Caco-2 (cell line): ENCODE measurements at regions of chrX and their contacts with region 1.

Region 1: DNA sequence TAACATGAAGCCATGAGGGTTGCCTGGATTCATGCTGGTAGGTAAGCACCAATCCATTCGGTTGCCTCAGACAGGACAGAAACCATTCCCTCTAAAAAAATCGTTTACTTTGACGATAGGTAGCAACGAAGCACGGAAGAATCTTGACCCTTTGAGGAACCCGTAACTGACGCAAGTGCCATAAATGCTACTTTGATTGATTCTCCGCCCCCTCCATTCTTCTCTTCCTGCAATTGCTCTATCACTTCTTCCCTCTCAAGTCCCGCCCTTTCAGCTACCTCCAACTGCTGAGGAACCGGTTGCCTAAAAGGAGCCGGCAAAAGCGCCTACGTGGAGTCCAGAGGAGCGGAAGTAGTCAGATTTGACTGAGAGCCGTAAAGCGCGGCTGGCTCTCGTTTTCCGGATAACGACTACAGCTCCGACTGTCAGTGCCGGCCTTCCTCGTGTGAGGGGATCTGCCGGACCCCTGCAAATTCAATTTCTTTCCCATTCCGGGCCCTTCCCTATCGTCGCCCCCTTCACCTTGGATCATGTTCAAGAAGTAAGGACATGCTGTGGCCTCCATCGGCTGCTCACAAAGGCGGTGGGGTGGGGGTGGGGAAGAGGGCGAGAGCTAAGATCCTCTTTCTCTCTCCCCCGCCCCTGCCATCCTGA is at the start of gene MCTS1:
- DNase-seq: peak; percentile 88 to 95
- H3K4me3 ChIP-seq: peak within 1 kb of the TSS; percentile 67
- H3K4me3 Mint-ChIP-seq: peak within 1 kb of the TSS; percentile 99
- H3K27ac Mint-ChIP-seq: peak within 1 kb of the TSS; percentile 98
- H3K4me1 ChIP-seq: no peaks in the 10 kb centered on the region
- H3K4me1 Mint-ChIP-seq: no peaks in the 10 kb centered on the region
- H3K27me3 ChIP-seq: no peaks in the 10 kb centered on the region
- H3K27me3 Mint-ChIP-seq: no peaks in the 10 kb centered on the region
- CTCF ChIP-seq: no peak
- total RNA-seq, gene MCTS1: 50.5 and 55.8 TPM in 2 replicates

Region 2: GRCh38 chrX:120629667-120630537 is 26.1 kb after region 1 on chrX and contains the start of gene C1GALT1C1:
- CTCF ChIA-PET with region 1: no interaction called
- POLR2A ChIA-PET with region 1: no interaction called
- intact Hi-C with region 1: loop called (anchors 1 kb)
- DNase-seq: peak; percentile 92 to 93
- H3K4me3 ChIP-seq: peak within 1 kb of the TSS; percentile 61
- H3K4me3 Mint-ChIP-seq: peak within 1 kb of the TSS; percentile 78
- H3K27ac Mint-ChIP-seq: peak within 1 kb of the TSS; percentile 92
- H3K4me1 ChIP-seq: no peaks in the 10 kb centered on the region
- H3K4me1 Mint-ChIP-seq: no peaks in the 10 kb centered on the region
- H3K27me3 ChIP-seq: no peaks in the 10 kb centered on the region
- H3K27me3 Mint-ChIP-seq: no peaks in the 10 kb centered on the region
- CTCF ChIP-seq: no peak
- total RNA-seq, gene C1GALT1C1: 12.7 and 15.3 TPM in 2 replicates